ENCODE measurements at regions of chr3 and their contacts with region 1.

Region 1: GRCh38 chr3:36868614-36869436 is 76.0 kb downstream of the TRANK1 start:
- DNase-seq: peak; percentile 73
- H3K4me3 Mint-ChIP-seq: no peak overlapping the region
- H3K27ac Mint-ChIP-seq: no peak overlapping the region
- H3K4me1 Mint-ChIP-seq: peaks cover 5% of the 10 kb centered on the region
- H3K27me3 Mint-ChIP-seq: no peaks in the 10 kb centered on the region
- CTCF ChIP-seq: peak; percentile 82

Region 2: DNA sequence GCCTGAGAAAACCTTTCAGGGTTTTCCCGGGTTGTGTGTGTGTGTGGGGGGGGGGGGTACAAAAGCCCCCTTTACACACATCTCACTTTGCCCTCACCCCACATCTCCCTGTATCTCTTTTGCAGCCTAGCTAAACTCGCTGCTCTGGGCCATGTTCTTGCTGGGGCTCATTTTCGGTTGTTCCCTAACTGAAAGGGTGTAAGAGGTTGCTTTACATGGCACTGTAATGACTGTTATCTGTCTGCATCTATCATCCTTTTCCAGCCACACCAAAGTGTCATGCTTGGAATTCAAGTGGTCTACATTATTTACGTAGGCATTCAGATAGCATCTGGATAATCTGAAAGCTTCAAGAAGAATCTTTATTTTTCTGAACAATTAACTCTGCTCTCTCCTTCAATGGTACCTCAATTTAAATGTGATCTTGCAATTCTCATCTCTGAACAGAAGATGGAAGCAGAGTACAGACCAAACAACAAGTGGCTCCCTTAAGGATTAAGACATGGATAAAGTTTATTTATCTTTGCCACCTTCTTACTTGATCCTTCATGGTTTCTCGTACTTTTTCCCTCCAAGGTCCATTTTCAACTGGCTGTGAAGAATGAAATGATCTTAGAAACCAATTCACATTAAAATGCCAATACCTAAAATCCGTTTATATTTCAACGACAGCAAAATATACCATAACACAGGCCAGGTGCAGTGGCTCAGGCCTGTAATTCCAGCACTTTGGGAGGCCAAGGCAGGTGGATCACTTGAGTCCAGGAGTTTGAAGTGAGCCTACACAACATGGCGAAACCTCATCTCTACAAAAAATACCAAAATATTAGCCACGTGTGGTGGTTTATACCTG is 139.4 kb before region 1 on chr3:
- CTCF ChIA-PET with region 1: interaction called, 199 read pairs
- POLR2A ChIA-PET with region 1: no interaction called
- intact Hi-C with region 1: loop called (anchors 1 kb)
- DNase-seq: peak; percentile 64
- H3K4me3 Mint-ChIP-seq: no peak overlapping the region
- H3K27ac Mint-ChIP-seq: no peak overlapping the region
- H3K4me1 Mint-ChIP-seq: no peaks in the 10 kb centered on the region
- H3K27me3 Mint-ChIP-seq: peaks cover 21% of the 10 kb centered on the region
- CTCF ChIP-seq: peak; percentile 72

Region 3: DNA sequence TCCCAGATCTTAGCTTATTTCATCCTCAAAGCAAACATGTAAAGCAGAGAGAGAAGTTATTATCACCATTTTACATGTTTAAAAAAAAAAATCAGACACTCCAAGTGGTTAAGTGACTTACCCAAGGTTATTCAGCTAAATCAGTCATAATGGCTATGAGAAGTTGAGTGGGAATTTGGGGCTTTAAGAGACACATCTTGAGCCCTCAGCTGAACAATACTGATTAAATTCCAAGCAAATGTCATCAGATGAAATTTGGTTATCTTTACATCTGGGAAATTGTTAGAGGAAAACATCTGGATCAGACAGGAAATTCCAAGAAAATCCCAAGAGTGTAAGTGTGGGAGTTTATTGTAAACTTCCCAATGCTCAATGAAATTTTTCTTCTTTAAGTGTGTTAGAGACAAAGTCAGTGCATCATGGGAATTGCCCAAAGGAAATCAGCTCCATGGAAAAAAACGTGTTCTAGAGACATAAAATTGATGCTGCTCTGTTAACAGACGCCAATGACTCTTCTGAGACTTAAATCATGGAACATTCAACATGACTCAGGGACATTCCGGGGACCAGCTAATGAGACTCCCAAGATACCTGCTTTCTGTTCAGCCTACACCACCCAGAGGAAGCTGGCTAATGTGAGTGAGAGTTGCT is 84.7 kb before region 1 on chr3:
- CTCF ChIA-PET with region 1: interaction called, 12 read pairs
- POLR2A ChIA-PET with region 1: no interaction called
- intact Hi-C with region 1: no loop called
- DNase-seq: no peak
- H3K4me3 Mint-ChIP-seq: no peak overlapping the region
- H3K27ac Mint-ChIP-seq: no peak overlapping the region
- H3K4me1 Mint-ChIP-seq: no peaks in the 10 kb centered on the region
- H3K27me3 Mint-ChIP-seq: peaks cover 21% of the 10 kb centered on the region
- CTCF ChIP-seq: no peak

Region 4: GRCh38 chr3:36814776-36815175 is 54.0 kb before region 1 on chr3:
- CTCF ChIA-PET with region 1: interaction called, 19 read pairs
- POLR2A ChIA-PET with region 1: no interaction called
- intact Hi-C with region 1: no loop called
- DNase-seq: no peak
- H3K4me3 Mint-ChIP-seq: no peak overlapping the region
- H3K27ac Mint-ChIP-seq: no peak overlapping the region
- H3K4me1 Mint-ChIP-seq: peaks cover 11% of the 10 kb centered on the region
- H3K27me3 Mint-ChIP-seq: no peaks in the 10 kb centered on the region
- CTCF ChIP-seq: no peak

Region 5: GRCh38 chr3:36893137-36893557 is 24.3 kb after region 1 on chr3:
- CTCF ChIA-PET with region 1: interaction called, 17 read pairs
- POLR2A ChIA-PET with region 1: no interaction called
- intact Hi-C with region 1: no loop called
- DNase-seq: peak; percentile 14
- H3K4me3 Mint-ChIP-seq: no peak overlapping the region
- H3K27ac Mint-ChIP-seq: no peak overlapping the region
- H3K4me1 Mint-ChIP-seq: no peaks in the 10 kb centered on the region
- H3K27me3 Mint-ChIP-seq: no peaks in the 10 kb centered on the region
- CTCF ChIP-seq: no peak